ENCODE measurements at regions of chr14 and their contacts with region 1.

Region 1: GRCh38 chr14:50070840-50071548 is 45.4 kb downstream of the VCPKMT start:
- DNase-seq: no peak
- ATAC-seq: no peak
- H3K4me3 ChIP-seq: no peak overlapping the region
- H3K27ac ChIP-seq: peak overlapping the region; percentile 44; the same call in 1 of the 2 replicates
- H3K4me1 ChIP-seq: no peaks in the 10 kb centered on the region
- H3K27me3 ChIP-seq: no peaks in the 10 kb centered on the region
- CTCF ChIP-seq: no peak

Region 2: GRCh38 chr14:50087341-50088116 is 16.5 kb after region 1 on chr14:
- CTCF ChIA-PET with region 1: no interaction called
- POLR2A ChIA-PET with region 1: no interaction called
- in situ Hi-C with region 1: no loop called
- intact Hi-C with region 1: loop called (anchors 2 kb)
- DNase-seq: no peak
- ATAC-seq: no peak
- H3K4me3 ChIP-seq: no peak overlapping the region
- H3K27ac ChIP-seq: no peak overlapping the region
- H3K4me1 ChIP-seq: no peaks in the 10 kb centered on the region
- H3K27me3 ChIP-seq: no peaks in the 10 kb centered on the region
- CTCF ChIP-seq: no peak

Measured in Panc1 (cell line).